Gastrocnemius medialis (tissue), 4 donors: ENCODE measurements at regions of chrX and their contacts with region 1.

Region 1: GRCh38 chrX:72714476-72714916 is 390 bp upstream of the PHKA1 start:
- DNase-seq: peak; percentile 76 to 90
- ATAC-seq: peak; percentile 70 to 72
- H3K4me3 ChIP-seq: peak overlapping the region; percentile 56 to 72 (median 66)
- H3K27ac ChIP-seq: peak overlapping the region; percentile 91 to 93 (median 92)
- H3K4me1 ChIP-seq: peaks cover 0 to 4% of the 10 kb centered on the region in 2 donors
- H3K27me3 ChIP-seq: no peaks in the 10 kb centered on the region
- CTCF ChIP-seq: no peak
- POLR2A ChIP-seq: peak; percentile 64 to 68

Region 2: GRCh38 chrX:71482228-71482958 is 1232.1 kb before region 1 on chrX:
- in situ Hi-C with region 1: no loop called
- intact Hi-C with region 1: no loop called
- DNase-seq: no peak
- ATAC-seq: no peak
- H3K4me3 ChIP-seq: no peak overlapping the region
- H3K27ac ChIP-seq: no peak overlapping the region
- H3K4me1 ChIP-seq: no peaks in the 10 kb centered on the region
- H3K27me3 ChIP-seq: no peaks in the 10 kb centered on the region
- CTCF ChIP-seq: no peak
- POLR2A ChIP-seq: no peak

Region 3: DNA sequence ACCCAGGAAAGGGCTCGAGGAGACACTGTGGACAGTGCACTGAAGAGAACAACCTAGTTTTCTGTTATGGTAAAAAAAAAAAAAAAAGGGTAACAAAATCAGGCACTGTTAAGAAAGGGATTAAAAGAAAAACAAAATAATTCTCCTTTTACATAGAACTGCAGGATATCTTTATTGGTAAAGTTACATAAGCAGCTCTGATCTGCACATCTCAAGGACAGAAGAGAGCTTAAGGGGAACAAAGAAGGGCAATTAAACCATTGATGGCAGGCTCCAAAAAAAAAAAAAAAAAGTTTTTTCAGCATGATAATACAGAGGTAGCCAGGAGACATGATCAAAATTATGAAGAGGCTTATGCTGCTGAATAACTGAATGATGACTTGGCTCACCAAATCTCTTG is 226.8 kb before region 1 on chrX:
- in situ Hi-C with region 1: no loop called
- intact Hi-C with region 1: no loop called
- DNase-seq: no peak
- ATAC-seq: no peak
- H3K4me3 ChIP-seq: no peak overlapping the region
- H3K27ac ChIP-seq: no peak overlapping the region
- H3K4me1 ChIP-seq: no peaks in the 10 kb centered on the region
- H3K27me3 ChIP-seq: no peaks in the 10 kb centered on the region
- CTCF ChIP-seq: no peak
- POLR2A ChIP-seq: no peak

Region 4: DNA sequence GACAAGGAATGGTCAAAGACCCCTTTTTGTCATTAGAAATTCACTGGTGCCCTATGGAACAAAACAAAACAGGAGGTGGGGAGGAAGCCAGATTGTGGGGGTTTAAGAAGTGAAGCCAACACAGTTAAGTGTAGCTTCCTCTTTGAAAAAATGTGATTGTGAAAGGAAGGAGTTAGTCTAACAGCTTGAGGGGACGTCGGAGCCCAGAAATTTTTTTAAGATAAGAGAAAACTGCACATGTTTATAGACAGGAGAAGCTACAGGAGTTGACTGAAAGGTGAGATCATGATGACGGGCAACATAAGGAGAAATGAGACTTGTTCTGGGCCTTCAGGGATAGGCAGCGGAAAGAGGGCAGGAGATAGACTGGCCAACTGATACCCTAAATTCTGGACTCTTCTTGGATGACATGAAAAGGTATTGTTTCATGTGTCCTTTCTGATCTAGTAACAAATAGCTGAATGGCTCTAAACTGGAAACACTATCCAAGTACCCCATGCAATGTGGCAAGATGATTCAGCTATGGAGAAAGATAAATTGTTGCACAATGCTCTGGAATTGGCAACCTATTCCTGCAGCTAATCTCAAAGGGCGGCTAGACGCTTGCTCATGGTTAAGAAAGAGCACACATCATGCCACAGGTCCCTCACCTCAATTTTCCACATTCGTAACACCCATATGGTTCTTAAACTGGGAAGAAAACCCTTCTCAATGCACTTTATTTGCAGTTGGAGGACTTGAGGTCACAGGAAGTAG is 138.2 kb before region 1 on chrX:
- in situ Hi-C with region 1: no loop called
- intact Hi-C with region 1: loop called (anchors 5 kb)
- DNase-seq: peak; percentile 6 to 46
- ATAC-seq: peak; percentile 75 to 86
- H3K4me3 ChIP-seq: no peak overlapping the region
- H3K27ac ChIP-seq: peak overlapping the region in 3 of 4 donors; percentile 45 to 81 (median 52)
- H3K4me1 ChIP-seq: no peaks in the 10 kb centered on the region
- H3K27me3 ChIP-seq: no peaks in the 10 kb centered on the region
- CTCF ChIP-seq: no peak
- POLR2A ChIP-seq: no peak

Region 5: GRCh38 chrX:72620550-72621145 is 93.8 kb before region 1 on chrX:
- in situ Hi-C with region 1: no loop called
- intact Hi-C with region 1: loop called (anchors 2 kb)
- DNase-seq: peak; percentile 68 to 86
- ATAC-seq: peak; percentile 95 to 98
- H3K4me3 ChIP-seq: no peak overlapping the region
- H3K27ac ChIP-seq: peak overlapping the region; percentile 75 to 84 (median 82)
- H3K4me1 ChIP-seq: peaks cover 0 to 7% of the 10 kb centered on the region in 2 donors
- H3K27me3 ChIP-seq: no peaks in the 10 kb centered on the region
- CTCF ChIP-seq: no peak
- POLR2A ChIP-seq: peak in 1 of 2 donors; percentile 51

Region 6: GRCh38 chrX:72663737-72664136 is 50.8 kb before region 1 on chrX:
- in situ Hi-C with region 1: no loop called
- intact Hi-C with region 1: loop called (anchors 5 kb)
- DNase-seq: no peak
- ATAC-seq: no peak
- H3K4me3 ChIP-seq: no peak overlapping the region
- H3K27ac ChIP-seq: peak overlapping the region in 3 of 4 donors; percentile 57 to 80 (median 79)
- H3K4me1 ChIP-seq: peaks cover 0 to 21% of the 10 kb centered on the region in 2 donors
- H3K27me3 ChIP-seq: no peaks in the 10 kb centered on the region
- CTCF ChIP-seq: no peak
- POLR2A ChIP-seq: no peak

Region 7: DNA sequence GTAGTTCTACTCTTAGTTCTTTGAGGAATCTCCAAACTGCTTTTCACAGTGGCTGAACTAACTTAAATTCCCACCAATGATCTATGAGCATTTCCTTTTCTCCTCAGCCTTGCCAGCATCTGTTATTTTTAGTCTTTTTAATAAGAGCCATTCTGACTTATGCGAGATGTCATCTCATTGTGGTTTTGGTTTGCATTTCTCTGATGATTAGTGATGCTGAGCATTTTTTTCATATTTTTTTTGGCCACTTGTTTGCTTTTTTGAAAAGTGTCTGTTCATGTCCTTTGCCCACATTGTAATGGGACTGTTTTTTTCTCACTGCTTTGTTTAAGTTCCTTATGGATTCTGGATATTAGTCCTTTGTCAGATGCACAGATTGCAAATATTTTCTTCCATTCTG is 21.1 kb after region 1 on chrX:
- in situ Hi-C with region 1: no loop called
- intact Hi-C with region 1: no loop called
- DNase-seq: no peak
- ATAC-seq: no peak
- H3K4me3 ChIP-seq: no peak overlapping the region
- H3K27ac ChIP-seq: no peak overlapping the region
- H3K4me1 ChIP-seq: no peaks in the 10 kb centered on the region
- H3K27me3 ChIP-seq: peaks cover 0 to 3% (median 0%) of the 10 kb centered on the region in 3 donors
- CTCF ChIP-seq: no peak
- POLR2A ChIP-seq: no peak